Mammary epithelial cell (primary cell): ENCODE measurements at regions of chr6 and their contacts with region 1.

Region 1: GRCh38 chr6:24902782-24903181 is 33.0 kb downstream of the RIPOR2 start:
- DNase-seq: peak; percentile 41
- H3K4me3 ChIP-seq: no peak overlapping the region
- H3K27ac ChIP-seq: no peak overlapping the region
- H3K4me1 ChIP-seq: no peaks in the 10 kb centered on the region
- H3K27me3 ChIP-seq: no peaks in the 10 kb centered on the region
- CTCF ChIP-seq: no peak

Region 2: GRCh38 chr6:22917344-22917743 is 1985.4 kb before region 1 on chr6:
- CTCF ChIA-PET with region 1: no interaction called
- dilution Hi-C with region 1: no loop called
- in situ Hi-C with region 1: no loop called
- intact Hi-C with region 1: loop called (anchors 10 kb)
- DNase-seq: no peak
- H3K4me3 ChIP-seq: no peak overlapping the region
- H3K27ac ChIP-seq: no peak overlapping the region
- H3K4me1 ChIP-seq: no peaks in the 10 kb centered on the region
- H3K27me3 ChIP-seq: no peaks in the 10 kb centered on the region
- CTCF ChIP-seq: no peak